Right ventricle myocardium inferior (tissue), 1 donor: ENCODE measurements at regions of chr1 and their contacts with region 1.

Region 1: DNA sequence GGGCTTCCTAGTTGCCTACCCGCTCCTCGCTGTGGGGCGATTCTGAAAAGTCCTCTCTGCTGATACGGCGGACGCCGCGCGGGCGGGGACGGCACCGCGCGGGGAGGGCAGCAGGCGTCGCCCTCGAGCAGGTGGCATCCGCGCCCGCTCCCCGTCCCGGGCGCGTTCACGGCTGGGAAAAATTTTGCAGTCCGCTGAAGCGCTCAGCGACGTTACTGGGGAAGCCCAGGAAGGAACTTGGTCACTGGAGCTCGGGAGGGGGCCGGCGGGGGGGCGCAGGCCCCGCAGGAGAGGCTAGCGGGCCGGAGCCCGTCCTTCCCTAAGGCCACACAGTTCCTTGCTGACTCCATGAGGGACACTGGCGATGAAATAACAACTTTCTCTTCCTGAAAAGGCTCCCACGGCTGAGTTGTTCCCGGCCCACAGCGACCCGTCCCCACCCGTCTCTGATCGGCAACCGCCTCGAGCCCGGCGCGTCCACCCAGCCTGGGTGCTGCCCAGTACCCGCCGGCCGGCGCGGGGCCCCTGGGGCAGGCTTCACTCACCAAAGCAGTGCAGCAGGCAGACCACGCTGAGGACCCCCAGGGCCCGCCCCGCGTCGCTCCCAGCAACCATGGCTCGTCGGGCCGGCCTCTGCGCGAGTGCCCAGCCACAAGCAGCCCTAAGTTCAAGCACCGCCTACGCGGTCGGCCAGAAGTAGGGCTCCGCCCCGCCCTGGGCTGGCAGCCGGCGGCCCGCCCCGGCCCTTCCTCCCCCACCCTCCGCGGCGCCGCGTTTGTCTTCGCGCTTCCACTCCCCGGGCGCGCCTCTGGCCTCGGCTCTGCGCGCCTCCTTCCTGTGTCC is at the start of gene CD58:
- DNase-seq: peak; percentile 97
- ATAC-seq: peak; percentile 94
- total RNA-seq, gene CD58: 30.1 TPM

Region 2: DNA sequence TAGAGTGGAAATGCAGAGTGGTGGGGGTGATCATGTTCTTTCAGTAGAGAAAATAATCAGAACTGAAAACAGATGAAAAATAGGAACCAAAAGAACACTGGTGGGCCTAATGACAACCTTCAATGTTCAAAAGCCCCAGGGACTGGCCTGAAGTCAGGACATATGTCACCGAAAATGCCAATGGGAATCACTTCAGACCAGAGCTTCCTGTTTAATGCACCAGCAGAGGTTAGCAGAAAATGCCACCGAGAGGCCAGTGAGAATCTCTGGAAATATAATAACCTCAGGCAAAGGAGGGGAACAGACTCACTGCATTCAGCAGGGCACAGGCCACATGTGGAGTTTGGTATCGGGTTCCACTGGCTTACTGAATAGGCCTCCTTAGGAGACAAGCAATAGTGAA is 16.2 kb after region 1 on chr1:
- intact Hi-C with region 1: no loop called
- DNase-seq: no peak
- ATAC-seq: no peak

Region 3: DNA sequence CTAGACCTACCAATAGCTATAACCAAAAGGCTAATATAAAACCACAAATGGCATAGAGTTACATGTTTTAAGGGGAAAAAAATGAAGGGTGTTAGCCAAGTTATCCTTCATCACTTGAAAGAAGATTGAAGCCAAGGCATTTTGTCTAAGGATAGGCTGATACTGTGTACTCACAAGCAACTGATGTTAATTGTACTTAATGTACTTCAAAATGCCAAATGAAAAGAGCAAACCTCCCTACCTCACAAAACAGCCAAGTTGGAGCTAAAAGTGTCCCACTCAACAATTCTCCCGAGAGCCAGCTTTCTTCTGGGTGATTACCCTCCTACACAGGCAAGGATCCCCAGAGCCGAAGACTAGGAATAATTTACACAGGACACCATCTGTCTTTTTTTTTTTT is 101.3 kb after region 1 on chr1:
- intact Hi-C with region 1: loop called (anchors 2 kb)
- DNase-seq: no peak
- ATAC-seq: peak; percentile 29

Region 4: DNA sequence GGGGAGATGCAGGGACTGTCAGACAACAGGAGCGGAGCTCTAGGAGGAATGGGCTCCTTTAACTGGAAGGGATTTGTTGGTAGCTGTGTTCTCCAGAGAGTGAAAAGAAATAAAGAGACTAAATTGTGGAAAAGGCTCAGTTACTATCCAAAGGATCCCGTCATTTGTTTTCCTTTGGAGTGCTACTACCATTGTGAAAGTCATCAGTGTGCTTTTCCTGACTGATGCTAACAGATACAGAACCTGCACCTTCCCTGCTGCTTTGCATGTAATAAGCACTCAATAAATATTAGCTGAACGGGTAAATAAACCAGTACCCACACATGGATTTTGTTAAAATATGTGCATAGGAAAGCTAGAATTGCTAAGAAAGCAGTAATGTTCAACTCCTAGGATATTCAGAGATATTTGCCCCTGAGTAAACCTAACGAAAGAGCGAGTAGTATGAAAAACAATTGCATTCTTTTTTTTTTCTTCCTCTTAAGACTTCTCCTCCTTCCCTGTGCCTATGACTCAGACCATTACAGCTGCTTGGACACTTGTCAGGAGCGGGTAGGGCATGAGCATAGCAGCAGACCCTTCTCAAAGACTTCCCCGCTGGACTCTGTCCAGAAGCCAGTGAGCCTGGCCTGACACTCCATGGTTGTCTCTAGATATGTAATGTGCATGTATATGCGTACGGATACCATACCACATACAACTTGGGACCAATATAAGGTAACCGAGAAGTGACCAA is 380.8 kb after region 1 on chr1:
- intact Hi-C with region 1: no loop called
- DNase-seq: no peak
- ATAC-seq: peak; percentile 38

Region 5: GRCh38 chr1:117059678-117060440 is 489.3 kb after region 1 on chr1 and contains the start of gene TTF2:
- intact Hi-C with region 1: loop called (anchors 5 kb)
- DNase-seq: peak; percentile 92
- ATAC-seq: peak; percentile 100
- total RNA-seq, gene TTF2: 7.8 TPM